Activated CD4-positive, alpha-beta memory T cell treated with anti-CD3 and anti-CD28 coated beads for 36 hours (primary cell): ENCODE measurements at regions of chr18 and their contacts with region 1.

Region 1: DNA sequence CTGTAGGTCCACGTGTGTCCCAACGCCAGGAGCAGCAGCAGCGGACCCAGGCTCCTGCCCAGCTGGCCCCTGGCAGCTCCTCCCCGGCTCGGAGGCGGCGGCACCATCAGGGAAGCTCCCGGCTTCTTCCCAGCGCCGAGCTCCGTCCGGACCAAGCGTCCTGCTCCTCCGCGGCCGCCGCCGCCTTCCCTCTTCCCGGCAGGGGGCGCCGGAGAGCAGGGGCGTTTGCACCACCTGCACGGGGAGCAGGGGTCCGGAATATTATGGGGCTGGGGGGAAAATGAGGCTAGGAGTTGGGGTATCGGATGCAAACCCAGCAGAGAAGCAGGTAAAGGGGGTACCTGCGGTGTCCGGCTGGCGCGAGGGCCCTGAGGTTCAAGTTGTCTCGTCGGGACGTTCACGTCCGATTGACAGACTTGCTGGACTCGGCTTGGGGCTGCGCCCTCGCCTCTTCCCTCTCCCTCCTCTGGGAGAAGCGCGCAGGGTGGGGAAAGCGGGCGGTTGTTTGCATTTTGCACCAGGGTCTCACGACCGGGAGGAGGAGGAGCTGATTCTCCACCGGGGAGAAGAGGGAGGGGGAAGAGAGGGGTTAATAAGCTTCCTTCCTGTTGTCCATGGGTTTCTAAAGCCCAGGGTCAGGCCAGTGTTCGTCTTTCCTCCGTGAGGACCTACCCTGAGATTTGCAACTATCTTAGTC is at the start of gene CCBE1:
- DNase-seq: peak; percentile 61
- H3K4me3 Mint-ChIP-seq: no peak within 1 kb of the TSS
- H3K27ac Mint-ChIP-seq: no peak within 1 kb of the TSS
- H3K4me1 Mint-ChIP-seq: peaks cover 9% of the 10 kb centered on the region
- H3K27me3 Mint-ChIP-seq: peaks cover 42% of the 10 kb centered on the region
- total RNA-seq, gene CCBE1: 0.36 TPM in 1 of 2 experiments, not detected in the other

Region 2: GRCh38 chr18:59686260-59686659 is 11.1 kb before region 1 on chr18:
- CTCF ChIA-PET with region 1: interaction called, 18 read pairs
- POLR2A ChIA-PET with region 1: no interaction called
- intact Hi-C with region 1: no loop called
- DNase-seq: no peak
- H3K4me3 Mint-ChIP-seq: no peak overlapping the region
- H3K27ac Mint-ChIP-seq: no peak overlapping the region
- H3K4me1 Mint-ChIP-seq: no peaks in the 10 kb centered on the region
- H3K27me3 Mint-ChIP-seq: peaks cover 10% of the 10 kb centered on the region